ENCODE measurements at regions of chr18 and their contacts with region 1.

Region 1: GRCh38 chr18:74342416-74343043 is 26.9 kb downstream of the C18orf63 start:
- DNase-seq: peak; percentile 44
- H3K4me3 ChIP-seq: no peak overlapping the region
- H3K27ac ChIP-seq: no peak overlapping the region
- H3K27me3 ChIP-seq: no peaks in the 10 kb centered on the region
- CTCF ChIP-seq: peak; percentile 51

Region 2: GRCh38 chr18:74196220-74197119 is 146.1 kb before region 1 on chr18:
- in situ Hi-C with region 1: loop called (anchors 25 kb)
- DNase-seq: peak; percentile 51
- H3K4me3 ChIP-seq: peak overlapping the region; percentile 38
- H3K27ac ChIP-seq: no peak overlapping the region
- H3K27me3 ChIP-seq: no peaks in the 10 kb centered on the region
- CTCF ChIP-seq: peak; percentile 82